Left cardiac atrium (tissue), 4 donors: ENCODE measurements at regions of chr5 and their contacts with region 1.

Region 1: GRCh38 chr5:88729084-88729828 is 153.7 kb downstream of the MEF2C start:
- DNase-seq: peak; percentile 49
- ATAC-seq: peak; percentile 81 to 83

Region 2: GRCh38 chr5:88833371-88834130 is 104.3 kb after region 1 on chr5:
- intact Hi-C with region 1: loop called in 1 of 2 experiments (anchors 10 kb)
- DNase-seq: peak; percentile 61
- ATAC-seq: peak; percentile 77

Region 3: DNA sequence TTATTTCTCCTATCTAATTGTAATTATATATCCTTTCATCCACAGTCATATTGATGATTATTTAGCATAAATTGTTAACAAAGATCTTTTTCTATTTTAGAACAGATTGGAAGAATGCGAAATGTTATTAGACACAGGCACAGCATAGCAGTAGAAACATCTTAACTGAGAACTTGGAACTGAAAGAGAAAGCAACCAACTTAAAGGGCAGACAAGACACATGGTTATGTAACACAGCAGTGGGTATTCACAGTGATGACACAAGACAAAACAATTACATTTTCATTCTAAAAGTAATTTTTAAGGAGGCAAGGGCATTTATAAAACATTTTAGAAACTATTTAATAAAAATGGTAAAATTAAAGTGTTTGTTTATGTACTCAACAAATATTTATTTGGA is 211.5 kb after region 1 on chr5:
- intact Hi-C with region 1: no loop called
- DNase-seq: no peak
- ATAC-seq: no peak

Region 4: GRCh38 chr5:90184764-90185163 is 1455.5 kb after region 1 on chr5:
- intact Hi-C with region 1: loop called in 1 of 2 experiments (anchors 2 kb)
- DNase-seq: no peak
- ATAC-seq: no peak

Region 5: GRCh38 chr5:90264689-90265544 is 1535.7 kb after region 1 on chr5:
- intact Hi-C with region 1: loop called (anchors 2 to 10 kb)
- DNase-seq: peak; percentile 61
- ATAC-seq: peak; percentile 63 to 84